Left colon (tissue), 2 donors: ENCODE measurements at regions of chr14 and their contacts with region 1.

Region 1: DNA sequence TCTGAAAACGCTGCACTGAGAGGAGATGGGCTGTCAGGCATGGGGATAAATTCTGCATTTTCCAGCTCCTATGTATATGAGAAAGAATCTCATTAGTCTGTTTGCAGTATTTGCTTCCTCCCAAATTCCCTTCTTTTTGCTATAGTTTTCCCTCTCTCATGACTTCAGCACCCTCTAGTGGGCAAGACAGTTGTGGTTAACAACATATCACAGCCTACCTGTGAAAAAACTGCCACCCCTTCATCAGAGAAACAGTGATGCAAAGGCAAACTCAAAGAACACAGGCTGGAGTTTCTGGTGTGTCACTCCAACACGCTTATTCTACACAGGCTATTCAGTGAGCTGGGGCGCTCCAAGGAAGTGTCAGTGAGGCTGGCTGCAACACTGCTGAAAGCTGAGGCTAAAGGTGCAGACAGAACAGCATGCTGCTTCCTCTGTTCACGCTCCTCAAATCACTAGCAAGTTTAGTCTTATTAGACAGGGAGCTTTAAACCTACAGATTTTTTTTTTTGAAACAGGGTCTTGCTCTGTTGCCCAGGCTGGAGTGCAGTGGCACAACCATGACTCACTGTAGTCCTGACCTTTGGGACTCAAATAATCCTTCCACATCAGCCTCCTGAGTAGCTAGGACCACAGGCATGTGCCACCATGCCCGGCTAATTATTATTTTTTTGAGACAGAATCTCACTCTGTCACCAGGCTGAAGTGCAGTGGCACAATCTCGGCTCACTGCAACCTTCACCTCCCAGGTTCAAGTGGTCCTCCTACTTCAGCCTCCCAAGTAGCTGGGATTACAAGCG is 19.3 kb downstream of the ZC2HC1C start:
- DNase-seq: peak in 1 of 2 donors; percentile 53
- ATAC-seq: peak; percentile 77

Region 2: GRCh38 chr14:74945823-74946682 is 142.7 kb before region 1 on chr14:
- intact Hi-C with region 1: loop called in 1 of 2 experiments (anchors 5 kb)
- DNase-seq: peak; percentile 65 to 82
- ATAC-seq: peak; percentile 68

Region 3: DNA sequence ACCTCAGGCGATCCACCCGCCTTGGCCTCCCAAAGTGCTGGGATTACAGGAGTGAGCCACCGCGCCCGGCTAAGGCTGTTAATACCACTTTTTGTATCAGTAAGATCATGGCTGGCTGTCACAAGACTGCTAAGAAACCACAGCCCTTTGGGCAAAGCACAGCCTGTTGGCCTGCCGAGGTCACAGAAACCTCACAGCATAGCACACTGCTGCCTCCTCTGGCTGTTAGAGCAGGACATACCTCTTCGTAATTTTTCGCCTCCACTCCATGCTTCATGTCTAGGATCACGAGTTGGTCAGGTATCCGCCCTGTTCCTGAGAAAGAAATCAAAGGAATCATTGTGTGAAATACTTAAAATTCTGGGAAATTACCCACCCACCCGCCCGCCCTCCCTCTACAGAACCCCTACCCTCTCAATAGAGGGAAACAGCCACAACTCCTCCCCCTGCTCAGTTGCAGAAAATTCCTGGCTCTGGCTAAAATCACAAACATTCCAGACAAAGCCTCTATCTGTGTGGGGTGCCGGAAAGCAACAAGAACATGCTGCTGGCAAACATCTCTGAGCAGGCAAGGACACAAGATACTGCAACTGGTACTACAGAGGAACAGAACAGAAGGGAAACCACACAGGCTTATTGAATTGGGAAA is 58.8 kb after region 1 on chr14:
- intact Hi-C with region 1: no loop called
- DNase-seq: peak; percentile 46 to 65
- ATAC-seq: peak; percentile 36